Stomach (tissue), 19 donors: ENCODE measurements at regions of chr20 and their contacts with region 1.

Region 1: DNA sequence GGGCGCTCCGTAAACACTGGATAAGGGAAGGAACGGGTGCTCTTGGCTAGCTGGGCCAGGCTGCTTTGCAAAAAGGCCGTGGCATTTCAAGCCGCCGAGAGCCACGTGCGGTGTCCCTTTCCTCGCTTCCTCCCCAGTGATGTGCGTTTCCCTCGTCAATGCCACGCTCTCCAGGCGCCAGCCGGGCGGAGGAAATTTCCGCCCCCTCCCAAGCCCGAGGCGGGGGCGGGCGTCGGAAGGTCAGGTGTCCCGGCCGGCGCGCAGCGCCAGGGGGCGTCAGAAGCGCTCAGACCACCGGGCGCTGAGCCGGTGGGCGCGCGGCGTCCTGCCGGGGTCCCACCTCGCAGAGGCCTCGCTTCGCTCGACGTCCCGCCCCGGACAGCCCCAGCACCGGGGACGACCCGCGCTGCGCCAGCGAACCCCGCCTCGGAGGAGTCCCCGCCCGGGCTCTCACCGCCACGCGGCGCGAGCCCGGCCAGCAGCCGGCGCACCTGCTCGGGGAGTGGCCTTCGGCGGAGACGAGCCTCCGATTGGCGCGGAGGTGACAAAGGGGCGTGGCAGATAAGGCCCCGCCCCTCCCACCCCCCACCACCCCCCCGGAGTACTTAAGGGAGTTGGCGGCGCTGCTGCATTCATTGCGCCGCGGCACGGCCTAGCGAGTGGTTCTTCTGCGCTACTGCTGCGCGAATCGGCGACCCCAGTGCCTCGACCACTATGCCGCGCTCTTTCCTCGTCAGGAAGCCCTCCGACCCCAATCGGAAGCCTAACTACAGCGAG is at the start of gene SNAI1:
- DNase-seq: peak; percentile 86 to 95
- H3K4me3 ChIP-seq: peak within 1 kb of the TSS; percentile 45 to 59 (median 50)
- H3K27ac ChIP-seq: peak within 1 kb of the TSS; percentile 66 to 83 (median 75)
- H3K4me1 ChIP-seq: peaks cover 31 to 66% (median 53%) of the 10 kb centered on the region in 4 donors
- H3K27me3 ChIP-seq: peaks cover 0 to 12% (median 0%) of the 10 kb centered on the region in 3 donors
- CTCF ChIP-seq: peak in 5 of 7 experiments; percentile 25 to 63 (median 39)
- EP300 ChIP-seq: no peak
- POLR2A ChIP-seq: peak in 2 of 4 donors; percentile 31 to 38
- total RNA-seq, gene SNAI1: 0.37 to 7.1 (median 3.2) TPM in 3 of 5 donors, not detected in the others

Region 2: GRCh38 chr20:50041246-50041873 is 58.8 kb after region 1 on chr20:
- intact Hi-C with region 1: no loop called
- DNase-seq: no peak
- H3K4me3 ChIP-seq: no peak overlapping the region
- H3K27ac ChIP-seq: peak overlapping the region in 1 of 5 donors; percentile 20
- H3K4me1 ChIP-seq: no peaks in the 10 kb centered on the region
- H3K27me3 ChIP-seq: no peaks in the 10 kb centered on the region
- CTCF ChIP-seq: no peak
- EP300 ChIP-seq: no peak
- POLR2A ChIP-seq: no peak

Region 3: GRCh38 chr20:50067866-50068612 is 85.5 kb after region 1 on chr20:
- intact Hi-C with region 1: loop called (anchors 5 kb)
- DNase-seq: no peak
- H3K4me3 ChIP-seq: no peak overlapping the region
- H3K27ac ChIP-seq: no peak overlapping the region
- H3K4me1 ChIP-seq: peaks cover 4 to 11% (median 9%) of the 10 kb centered on the region in 4 donors
- H3K27me3 ChIP-seq: no peaks in the 10 kb centered on the region
- CTCF ChIP-seq: no peak
- EP300 ChIP-seq: no peak
- POLR2A ChIP-seq: no peak

Region 4: GRCh38 chr20:50172347-50173013 is 189.9 kb after region 1 on chr20:
- intact Hi-C with region 1: loop called (anchors 10 kb)
- DNase-seq: peak; percentile 88 to 94
- H3K4me3 ChIP-seq: peak overlapping the region; percentile 51 to 57 (median 53)
- H3K27ac ChIP-seq: peak overlapping the region; percentile 78 to 91 (median 87)
- H3K4me1 ChIP-seq: peaks cover 8 to 28% (median 23%) of the 10 kb centered on the region in 4 donors
- H3K27me3 ChIP-seq: no peaks in the 10 kb centered on the region
- CTCF ChIP-seq: no peak
- EP300 ChIP-seq: no peak
- POLR2A ChIP-seq: no peak